ENCODE measurements at regions of chr11 and their contacts with region 1.

Region 1: DNA sequence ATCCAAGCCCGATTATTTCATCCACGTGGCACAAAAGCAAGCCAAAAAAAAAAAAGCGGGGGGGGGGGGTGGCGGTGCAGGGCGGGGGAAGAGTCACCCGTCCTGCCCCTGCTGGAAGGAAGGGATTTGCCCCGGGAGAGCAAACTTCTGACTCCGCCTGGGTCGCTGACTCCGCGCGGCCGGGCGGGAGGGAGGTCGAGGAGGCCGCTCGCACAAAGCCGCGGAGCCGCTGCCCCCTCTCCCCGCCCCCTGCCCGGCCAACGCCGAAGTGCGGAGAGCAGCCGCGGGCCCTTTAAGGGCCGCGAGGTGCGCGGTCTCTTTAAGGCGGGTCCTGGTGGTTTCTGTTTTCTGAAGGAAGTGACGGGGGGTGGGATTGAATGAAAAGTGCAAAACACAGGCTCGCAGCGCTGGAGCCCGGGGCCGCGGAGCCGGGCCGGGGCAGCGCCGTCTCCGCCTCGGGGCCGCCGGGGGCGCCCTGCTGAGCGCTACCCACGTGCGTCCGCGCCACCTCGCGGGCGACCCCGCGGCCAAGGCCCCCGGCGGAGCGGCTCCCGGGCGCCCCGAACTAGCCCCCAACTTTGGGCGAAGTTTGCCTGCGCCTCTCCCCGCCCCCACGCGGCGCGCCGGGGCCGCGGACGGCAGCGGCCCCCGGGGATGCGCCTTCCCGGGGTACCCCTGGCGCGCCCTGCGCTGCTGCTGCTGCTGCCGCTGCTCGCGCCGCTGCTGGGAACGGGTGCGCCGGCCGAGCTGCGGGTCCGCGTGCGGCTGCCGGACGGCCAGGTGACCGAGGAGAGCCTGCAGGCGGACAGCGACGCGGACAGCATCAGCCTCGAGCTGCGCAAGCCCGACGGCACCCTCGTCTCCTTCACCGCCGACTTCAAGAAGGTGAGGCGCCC is at the start of gene OAF:
- DNase-seq: peak; percentile 58 to 85
- H3K4me3 ChIP-seq: peak within 1 kb of the TSS; percentile 43 to 68 (median 58)
- H3K27ac ChIP-seq: no peak within 1 kb of the TSS
- H3K4me1 ChIP-seq: peaks cover 4 to 12% (median 8%) of the 10 kb centered on the region in 4 experiments
- H3K27me3 ChIP-seq: peaks cover 67 to 94% (median 87%) of the 10 kb centered on the region in 4 experiments
- CTCF ChIP-seq: no peak
- EP300 ChIP-seq: no peak
- POLR2A ChIP-seq: no peak
- RAD21 ChIP-seq: no peak
- total RNA-seq, gene OAF: 1.1 and 1.3 TPM in 2 replicates

Region 2: GRCh38 chr11:120182790-120183491 is 27.9 kb before region 1 on chr11:
- CTCF ChIA-PET with region 1: interaction called, 46 read pairs
- POLR2A ChIA-PET with region 1: no interaction called
- DNase-seq: peak in 1 of 2 experiments; percentile 76
- H3K4me3 ChIP-seq: no peak overlapping the region
- H3K27ac ChIP-seq: no peak overlapping the region
- H3K4me1 ChIP-seq: peaks cover 1 to 14% (median 4%) of the 10 kb centered on the region in 4 experiments; a peak in 4 of 7 replicates
- H3K27me3 ChIP-seq: peaks cover 0 to 28% (median 21%) of the 10 kb centered on the region in 4 experiments; a peak in 4 of 7 replicates
- CTCF ChIP-seq: peak; percentile 58 to 83 (median 64)
- EP300 ChIP-seq: no peak
- POLR2A ChIP-seq: no peak
- RAD21 ChIP-seq: peak; percentile 49 to 64